Activated CD8-positive, alpha-beta memory T cell treated with anti-CD3 and anti-CD28 coated beads, Interleukin-2, amount 10 ng/mL, durations not matched to agents 7 days and 5 days (primary cell): ENCODE measurements at regions of chr17 and their contacts with region 1.

Region 1: GRCh38 chr17:34562387-34562786 is 17.0 kb upstream of the TMEM132E start:
- DNase-seq: no peak
- ATAC-seq: no peak
- H3K4me3 Mint-ChIP-seq: no peak overlapping the region
- H3K27ac Mint-ChIP-seq: no peak overlapping the region
- H3K4me1 Mint-ChIP-seq: no peaks in the 10 kb centered on the region
- H3K27me3 Mint-ChIP-seq: peaks cover 19% of the 10 kb centered on the region

Region 2: GRCh38 chr17:34542700-34543336 is 19.6 kb before region 1 on chr17:
- CTCF ChIA-PET with region 1: interaction called, 16 read pairs
- DNase-seq: peak; percentile 55
- ATAC-seq: peak; percentile 30
- H3K4me3 Mint-ChIP-seq: no peak overlapping the region
- H3K27ac Mint-ChIP-seq: no peak overlapping the region
- H3K4me1 Mint-ChIP-seq: no peaks in the 10 kb centered on the region
- H3K27me3 Mint-ChIP-seq: peaks cover 54% of the 10 kb centered on the region

Region 3: DNA sequence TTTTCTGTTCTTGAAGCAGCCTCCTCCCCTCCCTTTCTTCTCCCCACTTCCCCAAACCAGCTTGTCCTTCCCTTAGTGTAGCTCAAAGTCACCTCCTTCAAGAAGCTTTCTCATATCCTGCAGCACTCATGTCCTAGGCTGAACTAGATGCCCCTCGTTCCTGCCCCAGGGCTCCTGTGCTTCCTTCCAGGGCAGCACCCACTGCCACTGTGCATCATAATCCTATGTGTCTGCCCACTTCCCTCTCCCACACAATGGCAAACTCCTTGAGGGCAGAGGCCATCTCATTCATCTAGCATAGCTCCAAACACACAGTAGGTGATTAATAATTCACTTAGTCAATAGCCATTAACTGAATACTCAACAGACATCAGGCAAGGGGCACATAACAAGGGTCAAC is 10.1 kb after region 1 on chr17:
- CTCF ChIA-PET with region 1: no interaction called
- DNase-seq: no peak
- ATAC-seq: no peak
- H3K4me3 Mint-ChIP-seq: no peak overlapping the region
- H3K27ac Mint-ChIP-seq: no peak overlapping the region
- H3K4me1 Mint-ChIP-seq: no peaks in the 10 kb centered on the region
- H3K27me3 Mint-ChIP-seq: peaks cover 56% of the 10 kb centered on the region